Left lung (tissue), 14 donors: ENCODE measurements at regions of chr10 and their contacts with region 1.

Region 1: GRCh38 chr10:113385021-113385999 is 167.5 kb upstream of the HABP2 start:
- DNase-seq: peak; percentile 78 to 96 (median 88)
- ATAC-seq: peak; percentile 99
- H3K4me3 ChIP-seq: no peak overlapping the region
- H3K27ac ChIP-seq: no peak overlapping the region
- H3K4me1 ChIP-seq: peaks cover 19 to 40% of the 10 kb centered on the region in 2 donors
- H3K27me3 ChIP-seq: no peaks in the 10 kb centered on the region
- CTCF ChIP-seq: peak; percentile 73

Region 2: GRCh38 chr10:112565434-112566053 is 819.8 kb before region 1 on chr10:
- intact Hi-C with region 1: loop called in 1 of 2 experiments (anchors 10 kb)
- DNase-seq: peak in 2 of 4 donors; percentile 24 to 68
- ATAC-seq: peak; percentile 89
- H3K4me3 ChIP-seq: no peak overlapping the region
- H3K27ac ChIP-seq: no peak overlapping the region
- H3K4me1 ChIP-seq: no peaks in the 10 kb centered on the region
- H3K27me3 ChIP-seq: no peaks in the 10 kb centered on the region
- CTCF ChIP-seq: peak; percentile 49 to 78